Activated CD8-positive, alpha-beta memory T cell treated with anti-CD3 and anti-CD28 coated beads, Interleukin-2, amount 10 ng/mL, durations not matched to agents 7 days and 5 days (primary cell): ENCODE measurements at regions of chr2 and their contacts with region 1.

Region 1: DNA sequence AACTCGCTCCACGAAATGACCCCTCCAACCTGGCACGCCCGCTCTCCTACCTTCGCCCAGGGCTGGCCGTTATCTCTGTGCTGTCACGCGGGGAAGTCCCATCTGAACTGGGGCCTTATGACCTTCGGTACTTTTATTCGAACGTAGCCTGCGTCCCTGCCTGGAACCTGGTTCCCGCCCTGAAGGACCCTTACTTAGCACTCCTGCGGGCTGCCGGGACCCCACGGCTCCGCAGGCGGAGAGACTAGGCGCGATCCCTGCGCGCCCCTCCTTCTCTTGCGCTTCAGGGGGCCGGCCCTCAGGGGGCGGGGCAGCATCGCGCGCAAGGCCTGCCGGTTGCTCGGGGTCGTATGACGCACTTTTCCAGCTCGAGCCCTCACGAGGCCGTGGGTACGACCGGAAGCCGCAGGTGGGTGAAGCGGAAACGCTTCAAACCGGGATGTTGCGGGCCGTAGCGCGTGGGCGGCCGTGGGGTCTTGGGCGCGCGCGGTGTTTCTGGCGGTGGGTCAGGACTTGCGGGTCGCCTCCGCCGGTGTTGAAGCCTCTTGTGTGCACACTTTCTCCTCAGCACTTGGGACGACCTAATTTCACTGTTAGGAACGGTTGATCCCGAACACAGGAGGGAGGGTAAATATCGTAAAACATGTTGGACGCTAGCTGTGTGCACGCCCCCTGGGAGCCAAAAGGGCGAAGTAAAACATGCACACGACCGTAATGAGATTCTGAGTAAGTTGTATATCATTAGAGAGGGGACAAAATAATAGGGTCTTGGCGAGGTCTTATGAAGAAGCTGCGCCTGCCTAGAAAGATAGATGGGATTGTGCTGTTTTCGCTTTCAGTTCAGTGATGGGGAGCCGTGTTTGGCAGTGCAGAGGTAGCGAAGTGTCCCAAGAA is at the starts of genes LIPT1 and TSGA10:
- DNase-seq: peak; percentile 95
- ATAC-seq: peak; percentile 98
- H3K4me3 Mint-ChIP-seq: peak within 1 kb of the TSS; percentile 85
- H3K27ac Mint-ChIP-seq: peak within 1 kb of the TSS; percentile 86
- H3K4me1 Mint-ChIP-seq: peaks cover 22% of the 10 kb centered on the region
- H3K27me3 Mint-ChIP-seq: no peaks in the 10 kb centered on the region
- total RNA-seq, gene LIPT1: 5.3 to 7.2 TPM
- total RNA-seq, gene TSGA10: 5.0 to 7.2 TPM

Region 2: DNA sequence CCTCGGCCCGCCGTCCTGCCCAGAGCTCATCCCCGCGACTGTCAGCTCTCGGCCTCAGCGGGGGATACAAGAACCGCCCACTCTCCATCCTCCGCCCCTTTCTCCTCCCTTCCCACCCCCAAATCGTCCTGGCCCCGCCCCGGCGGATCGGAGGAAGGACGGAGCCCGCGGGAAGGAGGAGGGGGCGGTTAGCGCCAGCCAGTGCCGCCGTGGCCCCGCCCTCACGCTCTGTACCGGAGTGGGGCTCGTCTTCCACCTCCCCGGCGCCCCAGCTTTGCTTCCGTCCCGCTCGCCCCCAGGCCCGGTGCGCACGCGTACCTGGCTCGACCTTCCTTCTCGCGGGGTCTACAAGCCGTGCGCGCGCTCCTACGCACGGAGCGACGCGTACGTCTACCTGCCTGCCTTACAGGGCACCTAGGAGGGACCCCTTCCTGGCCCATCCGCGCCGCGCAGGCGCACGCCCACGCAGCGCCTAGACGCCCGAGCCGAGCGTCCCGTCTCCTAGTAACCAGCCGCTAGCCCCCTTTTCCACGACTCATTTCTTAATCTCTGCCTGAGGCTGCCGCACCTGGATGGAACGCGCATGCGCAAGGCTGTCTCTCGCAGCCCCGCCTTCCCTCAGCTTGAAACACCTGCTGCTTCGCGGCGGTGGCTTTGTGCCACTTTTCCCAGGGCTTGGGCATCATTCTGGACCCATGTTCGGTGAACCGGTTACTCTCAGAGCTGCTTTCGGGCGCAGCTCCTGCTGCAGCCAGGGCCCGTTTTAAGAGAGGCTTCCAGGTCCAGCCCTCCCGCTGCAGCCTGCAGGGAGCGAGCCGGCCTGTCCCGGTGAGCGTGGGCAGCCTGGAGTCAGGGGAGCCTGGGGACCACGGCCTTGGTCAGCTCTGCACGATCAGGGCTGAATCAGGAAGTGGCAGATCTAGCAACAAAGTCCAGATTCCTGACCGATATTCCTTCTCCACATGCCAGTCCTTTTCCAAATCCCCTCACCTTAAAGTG is 13.5 kb before region 1 on chr2 and contains the start of gene C2orf15:
- CTCF ChIA-PET with region 1: interaction called, 27 read pairs
- DNase-seq: peak; percentile 96
- ATAC-seq: peak; percentile 93
- H3K4me3 Mint-ChIP-seq: peak within 1 kb of the TSS; percentile 97
- H3K27ac Mint-ChIP-seq: peak within 1 kb of the TSS; percentile 87
- H3K4me1 Mint-ChIP-seq: peaks cover 25% of the 10 kb centered on the region
- H3K27me3 Mint-ChIP-seq: peaks cover 3% of the 10 kb centered on the region
- total RNA-seq, gene C2orf15: 0.47 to 0.58 TPM

Region 3: DNA sequence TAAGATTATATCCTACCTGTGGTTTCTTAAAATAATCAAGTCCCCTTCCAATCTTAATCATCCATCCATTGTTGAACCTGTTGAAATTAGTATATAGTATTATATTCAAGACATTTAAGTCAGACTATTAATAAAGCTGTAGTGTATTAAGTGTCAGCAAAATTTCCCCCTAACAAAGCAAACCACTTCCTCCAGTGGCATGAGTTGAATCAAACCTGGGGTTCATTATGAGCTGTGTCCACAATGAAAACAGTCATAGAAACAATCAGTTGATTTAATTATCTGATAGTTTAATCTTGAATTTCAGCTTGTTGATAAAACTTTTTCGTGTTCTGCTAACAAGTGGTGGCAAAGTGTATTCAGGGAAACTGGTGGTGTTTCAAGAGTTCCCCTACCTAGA is 14.6 kb after region 1 on chr2:
- CTCF ChIA-PET with region 1: interaction called, 10 read pairs
- DNase-seq: no peak
- ATAC-seq: peak; percentile 68
- H3K4me3 Mint-ChIP-seq: no peak overlapping the region
- H3K27ac Mint-ChIP-seq: peak overlapping the region; percentile 40
- H3K4me1 Mint-ChIP-seq: peaks cover 22% of the 10 kb centered on the region
- H3K27me3 Mint-ChIP-seq: no peaks in the 10 kb centered on the region

Region 4: DNA sequence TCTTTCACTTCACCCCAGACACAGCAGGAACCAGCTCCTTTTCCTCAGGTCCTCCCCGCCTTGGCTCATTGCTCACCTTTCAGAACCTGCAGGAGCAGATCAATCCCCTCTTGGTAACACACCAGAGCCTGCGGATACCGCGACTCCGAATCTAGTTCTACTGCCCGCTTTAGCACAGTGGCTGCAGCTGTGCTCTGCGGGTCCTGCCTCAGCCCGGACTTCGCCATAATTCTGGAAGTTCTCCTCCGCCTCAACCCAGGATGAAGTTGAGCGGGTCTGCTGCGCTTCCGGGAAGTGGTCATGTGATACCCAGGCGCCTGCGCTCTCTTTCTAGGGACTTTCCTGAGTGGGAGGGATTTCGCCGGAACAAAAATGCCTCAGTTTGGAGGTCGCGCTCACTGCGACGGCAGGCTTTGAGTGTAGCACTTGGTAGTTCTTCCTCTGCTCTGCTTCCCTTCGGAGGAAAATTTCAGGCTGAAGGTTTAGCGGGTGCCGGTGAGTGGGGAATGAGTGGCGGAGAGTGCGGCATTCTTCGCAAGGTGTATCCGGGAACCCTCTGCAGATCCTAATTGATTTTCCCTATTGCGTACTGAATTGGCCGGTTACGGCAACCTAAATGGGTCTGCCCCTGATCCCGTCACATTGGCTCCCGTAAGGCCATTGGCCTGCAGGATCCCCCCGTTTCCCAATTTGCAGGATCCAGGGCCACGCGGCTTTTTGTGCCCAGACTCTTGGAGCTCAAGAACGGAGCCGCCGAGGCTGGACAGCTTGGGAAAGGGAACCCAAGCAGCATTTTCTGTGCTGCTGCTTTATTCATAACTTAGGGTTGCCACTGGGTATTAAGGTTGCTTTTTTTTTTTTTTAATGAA is 26.1 kb after region 1 on chr2 and contains the starts of genes MITD1 and MRPL30:
- CTCF ChIA-PET with region 1: interaction called, 20 read pairs
- DNase-seq: peak; percentile 94
- ATAC-seq: peak; percentile 96
- H3K4me3 Mint-ChIP-seq: peak within 1 kb of the TSS; percentile 98
- H3K27ac Mint-ChIP-seq: peak within 1 kb of the TSS; percentile 94
- H3K4me1 Mint-ChIP-seq: peaks cover 53% of the 10 kb centered on the region
- H3K27me3 Mint-ChIP-seq: no peaks in the 10 kb centered on the region
- total RNA-seq, gene MITD1: 57.4 to 63.1 TPM
- total RNA-seq, gene MRPL30: 24.4 to 26.2 TPM